Heart right ventricle (tissue), 16 donors: ENCODE measurements at regions of chr2 and their contacts with region 1.

Region 1: GRCh38 chr2:53715568-53715967 is 52.0 kb upstream of the CHAC2 start:
- DNase-seq: no peak
- ATAC-seq: no peak
- H3K4me3 ChIP-seq: no peak overlapping the region
- H3K27ac ChIP-seq: no peak overlapping the region
- H3K4me1 ChIP-seq: no peaks in the 10 kb centered on the region
- H3K27me3 ChIP-seq: no peaks in the 10 kb centered on the region
- CTCF ChIP-seq: peak; percentile 28 to 63 (median 57)

Region 2: GRCh38 chr2:52810460-52810859 is 905.1 kb before region 1 on chr2:
- intact Hi-C with region 1: loop called in 3 of 10 experiments (anchors 10 kb)
- DNase-seq: no peak
- ATAC-seq: peak in 7 of 8 donors; percentile 34 to 75 (median 70)
- H3K4me3 ChIP-seq: no peak overlapping the region
- H3K27ac ChIP-seq: no peak overlapping the region
- H3K4me1 ChIP-seq: peaks cover 0 to 7% (median 0%) of the 10 kb centered on the region in 9 donors
- H3K27me3 ChIP-seq: no peaks in the 10 kb centered on the region
- CTCF ChIP-seq: peak in 8 of 9 donors; percentile 12 to 62 (median 51)

Region 3: GRCh38 chr2:53422979-53423378 is 292.6 kb before region 1 on chr2:
- intact Hi-C with region 1: loop called in 1 of 10 experiments (anchors 10 kb)
- DNase-seq: no peak
- ATAC-seq: no peak
- H3K4me3 ChIP-seq: no peak overlapping the region
- H3K27ac ChIP-seq: no peak overlapping the region
- H3K4me1 ChIP-seq: no peaks in the 10 kb centered on the region
- H3K27me3 ChIP-seq: no peaks in the 10 kb centered on the region
- CTCF ChIP-seq: peak in 5 of 9 donors; percentile 24 to 38 (median 34)

Region 4: DNA sequence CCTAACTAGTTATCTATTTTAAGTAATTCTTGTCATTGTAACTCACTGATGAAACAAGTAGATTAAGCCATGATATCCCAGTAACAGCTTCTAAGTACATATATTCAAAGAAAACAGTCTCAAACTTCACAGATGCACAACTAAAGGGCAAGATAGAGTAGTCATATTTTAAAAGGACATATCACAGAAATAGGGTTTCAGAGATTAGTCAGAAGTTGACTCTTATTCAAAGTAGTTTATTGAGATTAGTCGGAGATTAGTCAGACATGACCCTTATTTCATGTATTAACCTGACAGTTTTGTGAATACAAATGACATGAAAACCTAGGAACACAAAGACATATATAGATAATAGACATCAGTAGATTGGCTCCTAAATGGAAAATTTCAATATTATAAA is 36.2 kb after region 1 on chr2:
- intact Hi-C with region 1: no loop called
- DNase-seq: no peak
- ATAC-seq: no peak
- H3K4me3 ChIP-seq: no peak overlapping the region
- H3K27ac ChIP-seq: no peak overlapping the region
- H3K4me1 ChIP-seq: peaks cover 0 to 11% (median 0%) of the 10 kb centered on the region in 9 donors
- H3K27me3 ChIP-seq: no peaks in the 10 kb centered on the region
- CTCF ChIP-seq: no peak